ENCODE measurements at regions of chr14 and their contacts with region 1.

Region 1: GRCh38 chr14:50773632-50774541 is 57.1 kb downstream of the NIN start:
- DNase-seq: peak in 5 of 6 donors; percentile 48 to 70 (median 57)
- ATAC-seq: peak; percentile 68 to 83 (median 80)
- H3K4me3 ChIP-seq: no peak overlapping the region
- H3K27ac ChIP-seq: peak overlapping the region in 2 of 4 donors; percentile 39 to 42
- H3K4me1 ChIP-seq: peaks cover 21 to 55% (median 33%) of the 10 kb centered on the region in 3 donors
- H3K27me3 ChIP-seq: no peaks in the 10 kb centered on the region
- CTCF ChIP-seq: peak; percentile 66 to 79 (median 73)

Region 2: GRCh38 chr14:50311975-50312733 is 461.7 kb before region 1 on chr14 and contains the starts of genes DMAC2L and L2HGDH:
- intact Hi-C with region 1: loop called in 1 of 3 experiments (anchors 10 kb)
- DNase-seq: peak; percentile 93 to 96 (median 94)
- ATAC-seq: peak; percentile 96 to 99 (median 97)
- H3K4me3 ChIP-seq: peak within 1 kb of the TSS; percentile 51 to 93 (median 78)
- H3K27ac ChIP-seq: peak within 1 kb of the TSS; percentile 83 to 91 (median 89)
- H3K4me1 ChIP-seq: peaks cover 8 to 13% (median 10%) of the 10 kb centered on the region in 3 donors
- H3K27me3 ChIP-seq: no peaks in the 10 kb centered on the region
- CTCF ChIP-seq: peak in 3 of 4 donors; percentile 39 to 60 (median 43)
- total RNA-seq, gene DMAC2L: 8.3 to 17.7 (median 9.9) TPM
- total RNA-seq, gene L2HGDH: 3.1 to 5.1 (median 3.7) TPM

Region 3: GRCh38 chr14:50542941-50543418 is 230.9 kb before region 1 on chr14:
- intact Hi-C with region 1: loop called in 1 of 3 experiments (anchors 10 kb)
- DNase-seq: peak in 2 of 6 donors; percentile 27 to 34
- ATAC-seq: peak; percentile 33 to 82 (median 72)
- H3K4me3 ChIP-seq: no peak overlapping the region
- H3K27ac ChIP-seq: no peak overlapping the region
- H3K4me1 ChIP-seq: peaks cover 5 to 28% (median 22%) of the 10 kb centered on the region in 3 donors
- H3K27me3 ChIP-seq: no peaks in the 10 kb centered on the region
- CTCF ChIP-seq: peak; percentile 25 to 47 (median 34)

Region 4: GRCh38 chr14:50619556-50620141 is 154.2 kb before region 1 on chr14:
- intact Hi-C with region 1: loop called in 1 of 3 experiments (anchors 10 kb)
- DNase-seq: no peak
- ATAC-seq: peak in 3 of 4 donors; percentile 72 to 84 (median 76)
- H3K4me3 ChIP-seq: no peak overlapping the region
- H3K27ac ChIP-seq: no peak overlapping the region
- H3K4me1 ChIP-seq: no peaks in the 10 kb centered on the region
- H3K27me3 ChIP-seq: no peaks in the 10 kb centered on the region
- CTCF ChIP-seq: peak in 3 of 4 donors; percentile 40 to 48 (median 40)

Measured in pancreas (tissue), 10 donors.